Posterior cingulate gyrus (tissue), 11 donors: ENCODE measurements at regions of chr4 and their contacts with region 1.

Region 1: DNA sequence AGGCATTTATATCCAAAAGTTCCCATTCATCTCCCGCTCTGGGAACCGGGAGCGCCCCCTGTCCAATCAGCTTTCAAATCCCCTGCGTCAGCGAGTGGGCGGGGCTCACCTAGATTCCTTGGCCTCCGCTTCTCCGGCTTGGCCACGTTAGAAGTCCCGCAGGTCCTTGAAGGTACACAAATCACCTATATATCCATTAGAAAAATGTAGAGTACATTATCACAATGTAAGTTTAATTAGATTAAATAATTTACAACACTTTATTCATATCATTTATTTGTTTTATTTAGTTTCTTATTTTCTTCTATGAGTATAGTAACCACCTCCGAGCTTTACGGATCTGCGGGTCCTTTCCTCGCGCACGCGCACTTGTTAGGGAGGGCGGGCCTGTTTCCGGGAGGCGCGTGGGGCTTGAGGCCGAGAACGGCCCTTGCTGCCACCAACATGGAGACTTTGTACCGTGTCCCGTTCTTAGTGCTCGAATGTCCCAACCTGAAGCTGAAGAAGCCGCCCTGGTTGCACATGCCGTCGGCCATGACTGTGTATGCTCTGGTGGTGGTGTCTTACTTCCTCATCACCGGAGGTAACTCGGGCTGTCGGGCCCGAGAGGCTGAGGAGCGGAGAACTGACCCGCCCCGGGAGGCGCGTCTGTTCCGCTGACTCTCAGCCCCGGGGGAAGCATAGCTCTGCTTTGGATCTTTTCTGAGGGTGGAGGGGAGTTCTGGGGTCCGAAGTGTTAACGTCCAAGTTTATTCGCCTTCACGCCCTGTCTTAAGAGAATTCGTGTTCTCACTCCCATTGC is at the start of gene OSTC:
- DNase-seq: peak; percentile 92 to 99 (median 96)

Region 2: GRCh38 chr4:108466936-108467902 is 183.2 kb before region 1 on chr4:
- intact Hi-C with region 1: no loop called
- DNase-seq: no peak

Region 3: DNA sequence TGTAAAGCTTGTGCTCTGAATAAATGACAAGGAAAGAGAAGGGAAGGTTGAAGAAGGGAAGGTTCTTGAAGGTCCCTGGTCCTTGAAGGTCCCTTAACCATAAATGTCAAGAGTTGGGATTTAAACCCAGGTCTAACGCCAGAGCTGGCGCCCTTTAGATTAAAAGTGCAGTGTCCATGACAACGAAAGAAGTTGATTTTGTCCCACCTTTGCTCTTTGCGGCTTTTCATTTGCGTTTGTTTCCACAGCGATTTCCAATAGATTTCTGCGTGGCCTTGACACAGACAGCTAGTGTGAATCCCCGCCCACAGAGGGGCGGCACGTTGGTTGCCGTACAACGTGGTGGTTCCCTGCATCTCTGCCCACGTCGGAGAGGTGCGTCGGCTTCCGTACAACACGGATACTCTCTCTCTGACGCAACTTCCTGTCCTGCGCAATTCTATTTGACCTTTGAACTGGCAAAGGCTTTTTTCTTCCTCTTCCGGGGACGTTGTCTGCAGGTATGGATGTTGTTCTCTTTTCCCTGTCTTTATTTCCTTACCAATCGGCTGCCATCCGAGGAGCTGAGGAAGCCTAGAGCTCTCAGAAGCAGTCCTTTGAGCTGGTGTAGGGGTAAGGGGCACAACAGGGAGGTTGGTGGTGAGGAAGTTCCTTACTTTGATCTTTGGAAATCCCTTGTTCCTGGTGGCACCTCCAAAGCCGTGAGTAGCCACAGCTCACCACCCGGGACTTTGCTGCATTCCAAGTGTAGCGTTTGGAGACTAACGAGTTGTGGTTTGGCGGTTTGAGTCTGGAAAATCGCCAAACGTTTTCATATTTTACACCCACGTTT is 30.1 kb before region 1 on chr4 and contains the start of gene RPL34:
- intact Hi-C with region 1: loop called (anchors 1 kb)
- DNase-seq: peak; percentile 92 to 100 (median 96)

Region 4: DNA sequence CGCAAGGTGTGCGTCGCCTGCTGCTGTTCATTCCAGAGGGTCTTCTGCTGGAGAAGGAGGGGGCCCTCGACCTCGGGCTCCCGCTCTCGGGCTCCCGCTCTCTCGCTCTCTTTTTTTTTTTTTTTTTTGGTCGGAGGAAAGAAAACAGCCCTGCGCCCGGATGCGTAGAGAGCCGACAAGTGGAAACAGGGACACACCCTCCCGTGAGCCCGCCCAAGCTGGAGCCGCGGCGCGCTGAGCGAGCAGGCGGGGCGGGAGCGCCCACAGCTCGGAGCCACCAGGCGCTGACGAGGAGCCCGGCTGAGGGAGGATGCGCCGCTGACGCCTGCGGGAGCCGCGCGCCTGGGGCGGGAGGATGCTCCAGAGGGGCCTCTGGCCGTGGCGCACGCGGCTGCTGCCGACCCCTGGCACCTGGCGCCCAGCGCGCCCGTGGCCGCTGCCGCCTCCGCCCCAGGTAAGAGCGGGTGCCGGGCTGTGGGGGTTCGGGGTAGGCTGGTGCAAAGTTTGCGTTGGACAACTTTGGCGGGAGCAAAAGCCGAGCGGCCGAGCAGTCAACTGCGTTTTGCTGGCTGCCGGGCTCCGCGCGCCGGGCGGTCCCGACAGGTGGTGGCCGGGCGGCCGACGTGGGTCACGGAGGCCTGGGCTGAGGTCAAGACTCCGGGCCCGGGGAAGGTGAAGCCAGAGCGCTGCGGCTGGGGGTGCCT is 909.7 kb after region 1 on chr4 and contains the start of gene MCUB:
- intact Hi-C with region 1: no loop called
- DNase-seq: peak; percentile 49 to 95 (median 68)